OCI-LY7 (cell line): ENCODE measurements at regions of chr4 and their contacts with region 1.

Region 1: DNA sequence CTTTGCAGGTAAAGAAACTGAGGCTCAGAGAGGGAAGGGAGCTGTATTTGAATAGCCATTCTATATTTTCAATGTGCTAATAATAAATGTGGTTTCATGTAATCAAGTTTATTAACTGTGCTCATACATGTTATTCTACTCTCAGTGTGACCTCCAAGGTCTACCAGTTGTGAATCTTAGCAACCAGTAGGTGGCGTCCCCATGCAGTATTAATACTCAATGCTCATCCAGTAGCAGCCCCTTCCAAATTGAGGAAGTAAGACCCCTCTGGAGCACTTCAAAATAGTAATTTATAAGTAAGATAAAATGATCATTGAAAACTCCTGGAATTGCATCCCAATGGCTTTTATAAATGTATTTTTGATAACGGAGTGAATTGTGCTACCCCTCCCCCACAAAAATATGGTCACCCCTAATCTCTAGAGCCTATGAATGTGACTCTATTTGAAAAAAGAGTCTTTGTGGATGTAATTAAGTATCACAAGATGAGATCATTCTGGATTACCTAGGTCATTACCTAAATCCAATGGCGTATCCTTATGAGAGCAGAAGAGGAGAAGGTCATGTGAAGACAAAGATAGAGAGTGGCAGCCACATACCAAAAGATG is 20.4 kb upstream of the SEPSECS start:
- DNase-seq: peak; percentile 80
- H3K4me3 ChIP-seq: no peak overlapping the region
- H3K27ac ChIP-seq: no peak overlapping the region
- H3K4me1 ChIP-seq: no peaks in the 10 kb centered on the region
- CTCF ChIP-seq: peak; percentile 96

Region 2: GRCh38 chr4:25367004-25367621 is 186.5 kb after region 1 on chr4:
- CTCF ChIA-PET with region 1: no interaction called
- POLR2A ChIA-PET with region 1: interaction called, 5 read pairs
- intact Hi-C with region 1: loop called (anchors 1 kb)
- DNase-seq: peak; percentile 58
- H3K4me3 ChIP-seq: no peak overlapping the region
- H3K27ac ChIP-seq: no peak overlapping the region
- H3K4me1 ChIP-seq: no peaks in the 10 kb centered on the region
- CTCF ChIP-seq: peak; percentile 97